GM12878 (cell line): ENCODE measurements at regions of chr1 and their contacts with region 1.

Region 1: GRCh38 chr1:156500797-156501499 is 373 bp upstream of the MEF2D start:
- DNase-seq: no peak
- ATAC-seq: peak; percentile 74
- H3K4me3 ChIP-seq: peak overlapping the region; percentile 92
- H3K27ac ChIP-seq: peak overlapping the region; percentile 97
- H3K4me1 ChIP-seq: peaks cover 52% of the 10 kb centered on the region
- H3K27me3 ChIP-seq: no peaks in the 10 kb centered on the region
- CTCF ChIP-seq: peak; percentile 57 to 71 (median 65)
- EP300 ChIP-seq: peak; percentile 4 to 68; a peak in 3 of 4 replicates
- POLR2A ChIP-seq: peak; percentile 88
- RAD21 ChIP-seq: peak; percentile 43

Region 2: DNA sequence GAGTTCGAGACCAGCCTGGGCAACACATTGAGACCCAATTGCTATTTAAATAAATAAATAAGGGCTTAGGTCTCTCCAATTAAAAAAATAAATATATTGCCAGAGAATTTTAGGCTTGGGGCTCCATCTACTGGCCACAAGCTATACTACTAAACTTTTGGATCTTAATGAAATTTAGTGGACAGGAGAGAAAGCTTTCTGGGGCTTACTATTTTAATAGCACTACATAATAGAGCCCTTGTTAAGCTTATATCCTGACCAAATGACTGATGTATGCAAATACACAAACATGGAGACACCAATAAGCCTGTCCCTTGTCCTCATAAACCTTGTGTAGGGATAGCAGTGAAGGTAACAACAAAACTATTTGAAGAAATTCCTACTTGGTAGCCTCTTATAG is 181.3 kb before region 1 on chr1:
- CTCF ChIA-PET with region 1: no interaction called
- POLR2A ChIA-PET with region 1: no interaction called
- RAD21 ChIA-PET with region 1: no interaction called
- SMC1A ChIA-PET with region 1: no interaction called
- in situ Hi-C with region 1: no loop called
- intact Hi-C with region 1: no loop called
- DNase-seq: no peak
- ATAC-seq: no peak
- H3K4me3 ChIP-seq: no peak overlapping the region
- H3K27ac ChIP-seq: no peak overlapping the region
- H3K4me1 ChIP-seq: no peaks in the 10 kb centered on the region
- H3K27me3 ChIP-seq: no peaks in the 10 kb centered on the region
- CTCF ChIP-seq: peak; percentile 41 to 51 (median 46)
- EP300 ChIP-seq: no peak
- POLR2A ChIP-seq: no peak
- RAD21 ChIP-seq: peak; percentile 64

Region 3: DNA sequence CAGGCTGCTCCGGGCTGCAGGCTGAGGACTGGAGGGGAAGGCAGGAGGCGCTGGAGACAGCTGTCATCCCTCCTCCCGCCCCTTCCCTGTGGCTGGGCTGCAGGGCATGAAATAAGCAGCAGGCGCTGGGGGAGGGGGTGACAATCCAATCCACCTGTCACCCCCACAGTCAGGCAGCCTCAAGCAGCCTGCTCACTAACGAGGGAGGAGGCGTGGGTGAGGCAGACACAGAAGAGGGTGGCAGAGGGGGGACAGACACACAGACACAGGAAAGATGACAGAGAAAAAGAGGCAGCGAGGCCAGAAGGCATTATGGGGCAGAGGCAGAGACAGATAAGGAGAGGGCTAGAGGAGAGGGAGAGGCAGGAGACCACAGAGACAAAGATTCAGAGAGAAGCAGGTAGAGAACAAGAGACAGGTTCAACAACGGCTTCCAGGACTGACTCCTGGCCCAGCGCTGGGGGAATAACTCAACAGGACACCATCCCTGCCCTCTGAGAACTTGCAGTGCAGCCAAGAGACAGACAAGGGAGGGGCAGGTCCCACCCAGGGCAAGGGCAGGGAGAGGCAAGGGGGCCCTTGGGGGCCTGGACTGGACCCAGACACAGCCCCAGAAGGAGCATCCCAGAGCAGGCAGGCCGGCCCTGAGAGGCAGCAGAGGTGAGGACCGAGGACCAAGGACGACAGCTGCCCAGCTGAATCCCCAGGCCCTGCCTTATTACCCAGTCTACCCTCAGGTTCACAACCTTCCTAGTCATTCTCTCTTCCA is 11.6 kb before region 1 on chr1:
- CTCF ChIA-PET with region 1: interaction called, 175 read pairs
- POLR2A ChIA-PET with region 1: interaction called, 630 read pairs
- RAD21 ChIA-PET with region 1: interaction called, 323 read pairs
- SMC1A ChIA-PET with region 1: interaction called, 460 read pairs
- in situ Hi-C with region 1: no loop called
- intact Hi-C with region 1: loop called (anchors 1 kb)
- DNase-seq: no peak
- ATAC-seq: peak; percentile 16
- H3K4me3 ChIP-seq: peak overlapping the region; percentile 73
- H3K27ac ChIP-seq: peak overlapping the region; percentile 96
- H3K4me1 ChIP-seq: peaks cover 86% of the 10 kb centered on the region
- H3K27me3 ChIP-seq: no peaks in the 10 kb centered on the region
- CTCF ChIP-seq: peak in 1 of 3 experiments; percentile 33; a peak in 1 of 6 replicates
- EP300 ChIP-seq: peak in 1 of 2 experiments; percentile 42; a peak in 2 of 4 replicates
- POLR2A ChIP-seq: peak; percentile 48
- RAD21 ChIP-seq: no peak; the same call in 1 of the 2 replicates

Region 4: GRCh38 chr1:156591432-156592157 is 90.6 kb after region 1 on chr1 and contains the start of gene NAXE:
- CTCF ChIA-PET with region 1: interaction called, 6 read pairs
- POLR2A ChIA-PET with region 1: interaction called, 8 read pairs
- RAD21 ChIA-PET with region 1: interaction called, 12 read pairs
- SMC1A ChIA-PET with region 1: interaction called, 5 read pairs
- in situ Hi-C with region 1: no loop called
- intact Hi-C with region 1: no loop called
- DNase-seq: no peak
- ATAC-seq: peak; percentile 97
- H3K4me3 ChIP-seq: peak within 1 kb of the TSS; percentile 89
- H3K27ac ChIP-seq: peak within 1 kb of the TSS; percentile 86
- H3K4me1 ChIP-seq: peaks cover 5% of the 10 kb centered on the region
- H3K27me3 ChIP-seq: no peaks in the 10 kb centered on the region
- CTCF ChIP-seq: 0 out of 6 replicates have a peak, but pooled peaks of 1 of the 3 experiments have one; percentile 1
- EP300 ChIP-seq: no peak
- POLR2A ChIP-seq: peak; percentile 91
- RAD21 ChIP-seq: no peak
- polyA plus RNA-seq, gene NAXE: 18.1 to 65.1 TPM

Region 5: DNA sequence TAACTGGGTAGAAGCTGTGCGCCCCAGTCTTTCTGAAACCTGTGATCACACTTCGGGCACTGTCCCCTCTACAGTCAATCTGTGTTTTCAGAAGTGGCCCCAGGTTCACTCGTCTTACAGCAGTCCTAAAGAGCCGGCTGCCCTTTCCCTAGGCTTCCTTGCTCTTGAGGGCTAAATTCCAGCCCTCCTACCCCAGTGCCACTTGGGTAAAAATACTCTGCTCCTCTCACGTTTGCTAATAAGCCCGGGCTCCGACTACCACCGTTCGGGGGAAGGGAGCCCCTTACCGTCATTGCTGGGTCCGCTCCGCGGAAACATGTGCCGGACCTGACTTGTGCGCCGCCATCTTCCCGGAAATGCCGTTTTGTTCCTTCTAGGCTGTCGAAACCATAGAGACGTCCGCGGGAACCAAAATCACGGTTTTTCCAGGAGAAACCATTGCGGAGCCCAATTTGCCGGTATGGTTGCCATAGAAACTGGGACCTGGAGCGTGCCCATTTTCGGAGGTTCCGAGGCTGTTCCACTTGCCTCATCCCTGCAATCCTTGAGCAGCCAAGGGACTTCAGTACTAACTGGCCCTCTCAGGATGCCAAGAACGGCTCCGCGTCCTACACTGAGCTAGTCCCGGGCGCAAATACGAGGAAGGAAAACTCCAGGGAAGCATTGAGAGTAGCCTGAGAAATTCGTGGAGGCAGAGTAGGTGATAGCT is 100.3 kb after region 1 on chr1 and contains the start of gene GPATCH4:
- CTCF ChIA-PET with region 1: interaction called, 5 read pairs
- POLR2A ChIA-PET with region 1: interaction called, 4 read pairs
- RAD21 ChIA-PET with region 1: interaction called, 4 read pairs
- SMC1A ChIA-PET with region 1: interaction called, 4 read pairs
- in situ Hi-C with region 1: no loop called
- intact Hi-C with region 1: loop called (anchors 5 kb)
- DNase-seq: no peak
- ATAC-seq: peak; percentile 80
- H3K4me3 ChIP-seq: peak within 1 kb of the TSS; percentile 82
- H3K27ac ChIP-seq: peak within 1 kb of the TSS; percentile 93
- H3K4me1 ChIP-seq: peaks cover 9% of the 10 kb centered on the region
- H3K27me3 ChIP-seq: no peaks in the 10 kb centered on the region
- CTCF ChIP-seq: no peak
- EP300 ChIP-seq: 0 out of 4 replicates have a peak, but pooled peaks of 1 of the 2 experiments have one; percentile 13
- POLR2A ChIP-seq: peak; percentile 92
- RAD21 ChIP-seq: no peak
- polyA plus RNA-seq, gene GPATCH4: 82.5 to 90.4 TPM

Region 6: DNA sequence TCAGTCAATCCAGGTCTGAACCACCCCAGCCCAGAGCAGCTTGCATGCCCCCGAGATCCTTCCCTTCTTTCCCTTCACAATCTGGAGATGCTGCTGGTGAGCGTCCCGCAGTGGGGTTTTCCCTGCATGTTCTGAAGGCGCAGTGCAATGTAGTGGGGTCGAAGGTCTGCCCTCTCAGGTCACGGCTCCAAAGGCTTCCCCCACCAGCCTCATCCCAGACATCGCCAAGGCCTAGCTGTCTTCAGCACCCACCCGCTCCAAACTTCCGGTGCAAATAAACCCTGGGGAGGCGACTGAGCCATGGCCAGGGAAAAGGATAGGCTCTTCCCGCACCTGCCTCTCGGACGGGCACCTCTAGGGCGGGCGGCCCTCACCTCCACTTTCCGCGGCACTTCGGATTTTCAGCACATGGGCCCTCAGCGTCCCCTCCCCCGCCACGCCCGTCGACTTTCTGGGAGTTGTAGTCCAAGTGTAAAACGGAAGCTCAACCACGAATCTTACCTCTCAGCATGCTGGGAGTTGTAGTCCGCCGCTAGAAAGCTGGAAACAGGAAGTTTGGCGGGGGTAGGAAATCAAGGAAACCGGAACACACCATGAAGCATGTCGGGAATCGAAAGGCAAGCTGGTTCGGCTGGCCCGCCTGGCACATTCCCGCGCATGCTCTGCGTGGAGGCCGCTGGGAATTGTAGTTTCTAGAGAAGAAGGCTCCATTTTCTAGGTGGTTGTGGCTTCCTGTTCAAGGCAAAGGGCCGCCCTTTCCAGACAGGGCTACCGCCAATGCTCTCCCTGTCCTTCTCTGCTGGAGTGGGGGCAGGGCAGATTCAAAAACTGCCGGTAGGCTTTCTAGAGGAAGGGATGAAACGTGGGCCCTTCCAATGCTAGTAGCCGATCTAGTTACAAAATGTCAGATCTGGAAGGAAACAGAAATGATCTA is 240.0 kb after region 1 on chr1 and contains the start of gene MRPL24:
- CTCF ChIA-PET with region 1: no interaction called
- POLR2A ChIA-PET with region 1: no interaction called
- RAD21 ChIA-PET with region 1: no interaction called
- SMC1A ChIA-PET with region 1: no interaction called
- in situ Hi-C with region 1: no loop called
- intact Hi-C with region 1: loop called (anchors 10 kb)
- DNase-seq: peak; percentile 99
- ATAC-seq: peak; percentile 93
- H3K4me3 ChIP-seq: peak within 1 kb of the TSS; percentile 68
- H3K27ac ChIP-seq: peak within 1 kb of the TSS; percentile 76
- H3K4me1 ChIP-seq: peaks cover 5% of the 10 kb centered on the region
- H3K27me3 ChIP-seq: no peaks in the 10 kb centered on the region
- CTCF ChIP-seq: no peak
- EP300 ChIP-seq: no peak; a peak in 2 of 4 replicates
- POLR2A ChIP-seq: peak; percentile 89
- RAD21 ChIP-seq: no peak
- polyA plus RNA-seq, gene MRPL24: 245 to 269 TPM

Region 7: GRCh38 chr1:156767101-156767878 is 266.3 kb after region 1 on chr1 and contains the start of gene PRCC:
- CTCF ChIA-PET with region 1: no interaction called
- POLR2A ChIA-PET with region 1: no interaction called
- RAD21 ChIA-PET with region 1: no interaction called
- SMC1A ChIA-PET with region 1: no interaction called
- in situ Hi-C with region 1: no loop called
- intact Hi-C with region 1: loop called (anchors 5 kb)
- DNase-seq: peak; percentile 100
- ATAC-seq: peak; percentile 94
- H3K4me3 ChIP-seq: peak within 1 kb of the TSS; percentile 92
- H3K27ac ChIP-seq: peak within 1 kb of the TSS; percentile 87
- H3K4me1 ChIP-seq: no peaks in the 10 kb centered on the region
- H3K27me3 ChIP-seq: no peaks in the 10 kb centered on the region
- CTCF ChIP-seq: no peak
- EP300 ChIP-seq: no peak
- POLR2A ChIP-seq: peak; percentile 84
- RAD21 ChIP-seq: no peak
- polyA plus RNA-seq, gene PRCC: 23.8 to 30.1 TPM